Ovary (tissue), 10 donors: ENCODE measurements at regions of chr6 and their contacts with region 1.

Region 1: GRCh38 chr6:47047479-47048407 is 5.6 kb upstream of the ADGRF1 start:
- DNase-seq: peak in 2 of 5 donors; percentile 21 to 31
- H3K4me3 ChIP-seq: no peak overlapping the region
- H3K27ac ChIP-seq: peak overlapping the region in 1 of 2 donors; percentile 34
- H3K4me1 ChIP-seq: no peaks in the 10 kb centered on the region
- H3K27me3 ChIP-seq: no peaks in the 10 kb centered on the region
- CTCF ChIP-seq: peak; percentile 34 to 58 (median 52)
- EP300 ChIP-seq: no peak
- POLR2A ChIP-seq: no peak

Region 2: GRCh38 chr6:46848684-46849360 is 198.9 kb before region 1 on chr6:
- intact Hi-C with region 1: loop called in 1 of 4 experiments (anchors 5 kb)
- DNase-seq: peak; percentile 68 to 87 (median 81)
- H3K4me3 ChIP-seq: no peak overlapping the region
- H3K27ac ChIP-seq: no peak overlapping the region
- H3K4me1 ChIP-seq: peaks cover 1% of the 10 kb centered on the region
- H3K27me3 ChIP-seq: no peaks in the 10 kb centered on the region
- CTCF ChIP-seq: peak; percentile 76 to 93 (median 86)
- EP300 ChIP-seq: no peak
- POLR2A ChIP-seq: no peak